Panc1 (cell line): ENCODE measurements at regions of chr14 and their contacts with region 1.

Region 1: DNA sequence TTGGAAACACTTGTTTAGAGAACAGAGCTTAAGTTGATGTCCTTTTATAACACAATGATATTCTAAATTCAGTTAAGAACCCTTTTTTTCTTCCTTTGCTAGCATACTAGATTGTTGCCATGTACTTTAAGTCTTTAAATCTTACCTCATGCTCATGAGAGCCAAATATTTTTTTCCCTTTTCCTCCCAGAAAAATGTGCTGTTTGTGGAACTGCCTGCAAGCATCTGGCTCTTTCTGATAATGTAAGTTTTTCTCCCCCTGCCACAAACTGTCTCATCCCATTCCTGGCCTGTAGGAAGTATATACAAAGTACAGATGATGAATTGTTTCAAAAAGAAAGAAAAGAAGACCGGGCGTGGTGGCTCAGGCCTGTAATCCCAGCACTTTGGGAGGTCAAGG is 5.3 kb downstream of the RNF212B start:
- DNase-seq: no peak
- ATAC-seq: no peak
- H3K4me3 ChIP-seq: no peak overlapping the region
- H3K27ac ChIP-seq: no peak overlapping the region
- H3K4me1 ChIP-seq: no peaks in the 10 kb centered on the region
- H3K27me3 ChIP-seq: peaks cover 3% of the 10 kb centered on the region; the same call in 1 of the 2 replicates
- CTCF ChIP-seq: no peak

Region 2: DNA sequence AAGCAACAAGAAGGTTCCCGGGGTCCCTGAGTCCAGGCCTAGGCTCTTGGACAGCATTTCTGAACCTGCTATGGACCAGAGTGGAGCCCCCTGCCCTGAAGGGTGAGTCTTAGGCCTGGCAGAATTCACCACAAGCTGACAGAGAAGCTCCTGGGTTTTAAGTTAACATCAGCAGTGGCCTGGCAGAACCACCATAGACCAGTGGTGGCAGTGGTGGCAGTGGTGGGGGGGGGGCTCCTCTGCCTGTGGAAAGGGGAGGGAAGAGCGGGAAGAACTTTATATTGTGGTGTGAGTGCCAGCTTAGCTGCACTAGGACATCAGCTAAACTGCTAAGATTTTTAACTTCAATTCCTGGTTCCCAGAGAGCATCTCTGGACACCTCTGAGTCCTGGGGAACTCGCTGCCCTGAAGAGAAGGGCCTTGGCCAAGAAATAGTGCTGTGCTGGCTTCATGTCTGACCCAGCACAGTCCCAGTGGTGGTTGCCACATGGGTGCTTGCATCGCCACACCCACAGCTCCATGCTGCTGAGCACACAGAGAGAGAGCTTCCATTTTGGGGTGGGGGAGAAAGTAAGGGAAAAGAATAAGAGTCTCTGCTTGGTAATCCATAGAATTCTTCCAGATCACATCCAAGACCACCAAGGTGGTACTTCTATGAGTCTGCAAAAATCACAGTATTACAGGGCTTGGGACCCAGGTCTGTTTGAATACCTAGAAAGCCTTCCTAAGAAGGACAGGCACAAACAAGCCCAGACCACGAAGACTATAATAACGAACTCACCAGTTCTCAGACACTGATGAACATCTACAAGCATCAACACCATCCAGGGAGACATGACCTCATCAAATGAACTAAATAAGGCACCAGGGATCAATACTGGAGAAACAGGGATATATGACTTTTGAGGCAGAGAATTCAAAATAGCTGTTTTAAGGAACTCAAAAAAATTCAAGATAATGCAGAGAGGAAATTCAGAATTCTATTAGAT is 25.7 kb before region 1 on chr14:
- CTCF ChIA-PET with region 1: no interaction called
- POLR2A ChIA-PET with region 1: no interaction called
- in situ Hi-C with region 1: no loop called
- intact Hi-C with region 1: no loop called
- DNase-seq: no peak
- ATAC-seq: no peak
- H3K4me3 ChIP-seq: no peak overlapping the region
- H3K27ac ChIP-seq: no peak overlapping the region
- H3K4me1 ChIP-seq: no peaks in the 10 kb centered on the region
- H3K27me3 ChIP-seq: 0 out of 2 replicates have a peak, but pooled peaks cover 3% of the 10 kb centered on the region
- CTCF ChIP-seq: no peak

Region 3: GRCh38 chr14:23275412-23275811 is 32.3 kb after region 1 on chr14:
- CTCF ChIA-PET with region 1: no interaction called
- POLR2A ChIA-PET with region 1: interaction called, 12 read pairs
- in situ Hi-C with region 1: no loop called
- intact Hi-C with region 1: no loop called
- DNase-seq: no peak
- ATAC-seq: no peak
- H3K4me3 ChIP-seq: no peak overlapping the region
- H3K27ac ChIP-seq: no peak overlapping the region
- H3K4me1 ChIP-seq: no peaks in the 10 kb centered on the region
- H3K27me3 ChIP-seq: no peaks in the 10 kb centered on the region
- CTCF ChIP-seq: no peak

Region 4: GRCh38 chr14:23861666-23862065 is 618.6 kb after region 1 on chr14:
- CTCF ChIA-PET with region 1: no interaction called
- POLR2A ChIA-PET with region 1: interaction called, 11 read pairs
- in situ Hi-C with region 1: no loop called
- intact Hi-C with region 1: no loop called
- DNase-seq: no peak
- ATAC-seq: no peak
- H3K4me3 ChIP-seq: no peak overlapping the region
- H3K27ac ChIP-seq: no peak overlapping the region
- H3K4me1 ChIP-seq: no peaks in the 10 kb centered on the region
- H3K27me3 ChIP-seq: no peaks in the 10 kb centered on the region
- CTCF ChIP-seq: no peak